ENCODE measurements at regions of chr14 and their contacts with region 1.

Region 1: GRCh38 chr14:99524804-99525698 is 43.8 kb downstream of the CCNK start:
- ATAC-seq: peak; percentile 38 to 81 (median 60)
- H3K4me3 ChIP-seq: no peak overlapping the region
- H3K27ac ChIP-seq: peak overlapping the region; percentile 40 to 47
- H3K4me1 ChIP-seq: peaks cover 53 to 58% of the 10 kb centered on the region in 2 donors

Region 2: DNA sequence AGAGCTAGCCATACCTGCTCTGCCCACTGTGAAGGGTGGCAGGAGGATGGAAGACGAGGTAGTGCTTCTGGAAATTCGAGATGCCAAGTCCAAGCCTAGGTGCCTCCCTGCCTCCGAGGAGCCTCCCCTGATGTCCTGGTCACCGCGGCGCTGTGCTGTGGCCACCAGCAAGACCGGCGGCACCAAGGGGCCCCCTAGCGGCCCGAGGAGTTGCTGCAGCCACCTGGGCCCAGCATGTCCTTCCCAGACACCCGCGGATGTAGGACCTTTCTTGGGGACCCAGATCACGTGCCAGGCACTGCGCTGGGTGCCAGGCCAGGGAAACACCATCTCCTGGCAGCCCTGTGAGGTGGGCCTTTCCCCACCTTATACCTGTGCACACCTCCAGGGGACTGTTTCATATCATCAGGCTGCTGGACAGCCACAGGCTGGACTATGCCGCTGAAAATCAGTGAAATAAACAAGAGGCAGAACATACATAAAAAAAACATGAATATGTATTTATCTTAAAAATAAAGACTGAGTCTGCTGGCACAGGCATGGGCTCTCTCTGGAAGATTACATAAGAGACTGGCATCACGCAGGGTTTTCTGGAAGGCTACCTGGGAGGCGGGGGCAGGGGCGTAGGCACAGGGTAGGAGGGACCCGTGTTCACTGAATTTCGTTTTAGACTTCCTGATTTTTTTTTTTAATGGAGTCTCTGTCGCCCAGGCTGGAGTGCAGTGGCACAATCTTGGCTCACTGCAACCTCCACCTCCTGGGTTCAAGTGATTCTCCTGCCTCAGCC is 104.0 kb after region 1 on chr14:
- in situ Hi-C with region 1: loop called in 5 of 9 experiments (anchors 10 to 25 kb)
- ATAC-seq: peak; percentile 88 to 98 (median 94)
- H3K4me3 ChIP-seq: no peak overlapping the region
- H3K27ac ChIP-seq: no peak overlapping the region
- H3K4me1 ChIP-seq: peaks cover 16 to 23% of the 10 kb centered on the region in 2 donors

Region 3: GRCh38 chr14:99636487-99636886 is 111.4 kb after region 1 on chr14:
- in situ Hi-C with region 1: loop called in 5 of 9 experiments (anchors 10 to 25 kb)
- ATAC-seq: no peak
- H3K4me3 ChIP-seq: no peak overlapping the region
- H3K27ac ChIP-seq: no peak overlapping the region
- H3K4me1 ChIP-seq: peaks cover 3 to 11% of the 10 kb centered on the region in 2 donors

Region 4: DNA sequence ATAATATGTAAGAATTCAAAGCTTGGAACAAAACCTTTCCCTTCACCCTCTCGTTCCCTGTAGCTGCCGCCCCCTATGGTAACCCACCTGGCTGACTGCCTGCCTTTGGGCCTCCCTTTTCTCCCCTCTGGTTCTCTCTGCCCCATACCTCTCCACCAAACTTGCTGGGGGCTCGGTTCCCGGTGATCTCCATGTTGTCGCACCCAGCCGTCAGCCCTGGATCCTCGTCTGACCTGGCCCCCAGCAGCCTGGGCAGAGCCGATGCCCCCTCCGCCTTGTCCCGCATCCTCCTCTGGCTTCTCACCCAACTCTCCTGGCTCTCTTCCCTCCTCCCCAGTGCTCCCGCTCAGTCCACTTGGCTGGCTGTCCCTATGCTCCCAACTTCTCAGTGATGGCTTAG is 163.6 kb after region 1 on chr14:
- in situ Hi-C with region 1: no loop called
- ATAC-seq: no peak
- H3K4me3 ChIP-seq: no peak overlapping the region
- H3K27ac ChIP-seq: no peak overlapping the region
- H3K4me1 ChIP-seq: peaks cover 0 to 4% of the 10 kb centered on the region in 2 donors